A549 (cell line): ENCODE measurements at regions of chr15 and their contacts with region 1.

Region 1: GRCh38 chr15:66851226-66852071 is 149.4 kb downstream of the SMAD6 start:
- DNase-seq: peak; percentile 92 to 97
- ATAC-seq: peak; percentile 87 to 95
- H3K4me3 ChIP-seq: no peak overlapping the region
- H3K27ac ChIP-seq: peak overlapping the region; percentile 64 to 81
- H3K4me1 ChIP-seq: peaks cover 34% of the 10 kb centered on the region
- CTCF ChIP-seq: peak; percentile 93
- EP300 ChIP-seq: no peak
- POLR2A ChIP-seq: no peak
- RAD21 ChIP-seq: peak; percentile 83 to 93

Region 2: DNA sequence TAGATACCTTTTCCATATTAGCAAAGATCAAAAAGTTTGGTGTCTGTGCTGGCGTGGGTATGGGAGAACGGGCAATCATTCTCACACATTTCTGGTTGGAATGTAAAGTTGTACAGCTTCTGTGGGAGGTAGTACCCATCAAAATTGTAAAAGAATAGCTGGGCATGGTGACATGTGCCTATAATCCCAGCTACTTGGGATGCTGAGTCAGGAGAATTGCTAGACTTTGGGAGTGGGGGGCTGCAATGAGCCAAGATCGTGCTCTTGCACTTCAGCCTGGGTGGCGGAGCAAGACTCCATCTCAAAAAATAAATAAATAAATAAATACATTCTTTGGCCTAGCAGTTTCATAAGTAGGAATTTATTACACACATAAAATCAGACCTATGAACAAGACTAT is 308.6 kb before region 1 on chr15:
- CTCF ChIA-PET with region 1: no interaction called
- POLR2A ChIA-PET with region 1: no interaction called
- DNase-seq: no peak
- ATAC-seq: no peak
- H3K4me3 ChIP-seq: no peak overlapping the region
- H3K27ac ChIP-seq: no peak overlapping the region
- H3K4me1 ChIP-seq: no peaks in the 10 kb centered on the region
- CTCF ChIP-seq: no peak
- EP300 ChIP-seq: no peak
- POLR2A ChIP-seq: no peak
- RAD21 ChIP-seq: no peak

Region 3: DNA sequence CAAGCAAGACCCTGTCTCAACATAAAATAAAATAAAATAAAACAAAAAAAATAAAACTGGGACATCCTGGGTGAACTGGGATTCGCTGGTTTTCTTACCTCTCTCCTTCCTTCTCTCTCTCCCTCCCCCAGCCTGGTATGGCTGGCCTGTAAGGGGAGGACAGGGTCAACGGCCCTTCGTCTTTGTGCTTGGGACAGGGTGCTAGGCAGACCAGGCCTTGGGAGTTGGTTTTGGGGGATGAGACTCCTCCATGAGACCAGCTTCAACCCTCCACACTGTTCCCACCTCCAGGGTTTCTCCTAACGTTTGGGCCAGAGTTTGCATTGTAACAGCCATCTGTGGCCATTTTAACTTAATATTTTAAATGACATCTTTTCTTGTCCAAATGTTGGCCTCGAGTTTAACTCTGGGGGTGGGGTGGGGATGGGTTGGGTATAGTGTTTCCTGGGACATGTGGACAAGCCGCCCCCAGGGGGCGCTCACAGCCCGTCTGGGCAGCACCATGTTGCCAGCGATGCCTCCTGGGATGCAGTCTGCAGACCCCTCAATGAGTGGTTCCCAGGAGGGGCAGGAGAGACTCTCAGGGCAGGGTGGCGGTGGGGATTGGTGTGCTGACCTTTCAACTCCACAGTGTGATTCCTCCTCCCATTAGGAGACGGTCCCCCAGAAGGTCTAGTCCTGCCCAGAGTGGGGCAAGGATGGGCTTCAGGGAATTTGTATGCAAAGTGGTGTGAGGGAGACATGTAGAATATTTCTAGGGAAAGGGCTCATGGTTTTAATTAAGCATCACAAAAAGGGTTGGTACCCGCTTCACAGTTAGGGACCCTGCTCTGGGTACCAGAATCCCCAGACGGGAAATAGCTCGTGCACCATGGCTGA is 247.9 kb before region 1 on chr15:
- CTCF ChIA-PET with region 1: interaction called, 148 read pairs
- POLR2A ChIA-PET with region 1: no interaction called
- DNase-seq: peak; percentile 61 to 86
- ATAC-seq: peak; percentile 80 to 97
- H3K4me3 ChIP-seq: no peak overlapping the region
- H3K27ac ChIP-seq: no peak overlapping the region
- H3K4me1 ChIP-seq: no peaks in the 10 kb centered on the region
- CTCF ChIP-seq: peak; percentile 95
- EP300 ChIP-seq: no peak
- POLR2A ChIP-seq: no peak
- RAD21 ChIP-seq: peak; percentile 92

Region 4: DNA sequence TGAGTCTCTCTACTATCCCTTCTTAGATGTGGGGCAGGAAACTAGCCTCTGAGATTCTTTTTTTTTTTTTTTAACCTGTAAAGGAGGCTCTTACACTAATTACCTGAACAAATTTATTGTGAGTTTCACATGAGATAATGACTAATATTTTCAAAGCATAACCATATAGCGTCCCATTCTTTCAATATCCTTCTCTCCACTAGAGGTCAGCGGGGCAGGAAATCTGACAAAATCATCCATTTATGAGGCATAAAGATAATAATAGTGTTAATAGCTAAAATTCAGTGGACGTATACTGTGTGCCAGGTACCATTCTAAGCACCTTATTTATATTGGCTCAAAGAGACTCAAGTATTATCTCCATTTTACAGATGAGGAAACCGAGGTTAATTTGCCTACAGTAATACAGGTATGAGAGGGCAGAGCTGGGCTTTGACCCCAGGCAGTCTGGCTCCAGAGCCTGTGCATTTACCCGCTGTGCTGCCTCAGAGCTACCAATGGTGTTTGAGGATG is 165.8 kb before region 1 on chr15:
- CTCF ChIA-PET with region 1: interaction called, 24 read pairs
- POLR2A ChIA-PET with region 1: no interaction called
- DNase-seq: no peak
- ATAC-seq: peak; percentile 51 to 78; a peak in 4 of 6 replicates
- H3K4me3 ChIP-seq: no peak overlapping the region
- H3K27ac ChIP-seq: no peak overlapping the region
- H3K4me1 ChIP-seq: no peaks in the 10 kb centered on the region
- CTCF ChIP-seq: peak; percentile 58
- EP300 ChIP-seq: no peak
- POLR2A ChIP-seq: no peak
- RAD21 ChIP-seq: peak; percentile 44

Region 5: DNA sequence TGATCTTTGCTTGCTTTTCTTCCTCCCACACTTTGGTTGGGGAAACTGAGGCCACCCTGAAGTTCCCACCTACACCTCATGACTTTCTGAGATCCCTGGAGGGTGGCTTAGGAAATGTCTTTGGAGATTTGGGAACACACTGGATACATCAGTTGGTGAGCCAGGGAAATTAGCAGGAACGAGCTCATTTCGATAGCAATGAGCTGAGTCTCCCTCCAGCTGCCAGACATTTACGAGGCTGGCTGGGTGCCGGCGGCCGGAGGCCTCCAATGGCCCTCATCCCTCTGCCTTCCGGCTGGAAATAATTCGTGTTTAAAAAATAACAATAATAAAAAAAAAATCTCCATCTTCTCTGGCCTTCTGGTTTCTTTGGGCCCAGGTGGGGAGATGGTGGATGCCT is 110.6 kb before region 1 on chr15:
- CTCF ChIA-PET with region 1: interaction called, 26 read pairs
- POLR2A ChIA-PET with region 1: no interaction called
- DNase-seq: no peak
- ATAC-seq: no peak
- H3K4me3 ChIP-seq: no peak overlapping the region
- H3K27ac ChIP-seq: peak overlapping the region in 1 of 2 experiments; percentile 33; a peak in 1 of 6 replicates
- H3K4me1 ChIP-seq: peaks cover 36% of the 10 kb centered on the region
- CTCF ChIP-seq: no peak
- EP300 ChIP-seq: no peak
- POLR2A ChIP-seq: no peak
- RAD21 ChIP-seq: no peak

Region 6: GRCh38 chr15:66789029-66790025 is 62.1 kb before region 1 on chr15:
- CTCF ChIA-PET with region 1: interaction called, 465 read pairs
- POLR2A ChIA-PET with region 1: interaction called, 7 read pairs
- DNase-seq: peak in 1 of 2 experiments; percentile 77
- ATAC-seq: peak; percentile 83
- H3K4me3 ChIP-seq: no peak overlapping the region
- H3K27ac ChIP-seq: 0 out of 6 replicates have a peak overlapping the region, but pooled peaks of 1 of the 2 experiments have one; percentile 6
- H3K4me1 ChIP-seq: peaks cover 19% of the 10 kb centered on the region; the same call in 2 of the 3 replicates
- CTCF ChIP-seq: peak; percentile 66
- EP300 ChIP-seq: no peak
- POLR2A ChIP-seq: no peak
- RAD21 ChIP-seq: peak; percentile 72 to 73

Region 7: DNA sequence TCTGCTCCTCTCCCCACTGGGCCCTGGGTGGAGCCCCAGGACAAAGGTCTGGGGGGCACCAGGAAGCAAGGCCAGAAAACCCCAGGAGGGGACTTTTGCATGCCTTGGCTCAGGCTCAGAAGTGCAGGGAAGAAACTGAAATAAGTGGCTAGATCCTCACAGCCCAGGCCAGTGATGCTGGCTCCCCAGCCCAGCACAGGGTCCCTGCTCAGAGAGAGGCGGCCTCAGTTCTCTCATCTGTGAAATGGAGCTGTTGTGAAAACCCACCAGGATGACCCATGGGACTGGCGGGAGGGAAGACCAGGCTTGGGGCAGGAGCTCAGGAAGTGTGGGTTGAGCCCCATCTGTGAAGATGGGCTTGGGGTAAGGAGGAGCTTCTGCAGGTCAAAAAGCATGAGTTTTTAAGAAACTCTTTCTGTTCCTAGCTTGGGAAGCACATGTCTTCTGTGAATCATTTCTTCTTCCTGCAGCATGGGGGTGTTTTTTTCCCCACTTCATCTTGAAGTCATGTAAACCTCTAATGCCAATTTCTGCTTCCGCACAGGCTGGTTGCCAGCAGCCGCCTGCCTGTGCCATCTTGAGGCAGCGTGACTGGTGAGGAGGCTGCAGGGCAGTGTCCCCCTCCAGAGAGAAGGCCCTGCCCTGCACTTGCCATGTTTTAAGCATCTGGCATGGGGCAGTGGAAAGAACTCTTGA is 30.8 kb before region 1 on chr15:
- CTCF ChIA-PET with region 1: interaction called, 38 read pairs
- POLR2A ChIA-PET with region 1: no interaction called
- DNase-seq: no peak
- ATAC-seq: no peak
- H3K4me3 ChIP-seq: no peak overlapping the region
- H3K27ac ChIP-seq: peak overlapping the region in 1 of 2 experiments; percentile 35; a peak in 1 of 6 replicates
- H3K4me1 ChIP-seq: peaks cover 16% of the 10 kb centered on the region
- CTCF ChIP-seq: no peak
- EP300 ChIP-seq: no peak
- POLR2A ChIP-seq: no peak
- RAD21 ChIP-seq: no peak

Region 8: DNA sequence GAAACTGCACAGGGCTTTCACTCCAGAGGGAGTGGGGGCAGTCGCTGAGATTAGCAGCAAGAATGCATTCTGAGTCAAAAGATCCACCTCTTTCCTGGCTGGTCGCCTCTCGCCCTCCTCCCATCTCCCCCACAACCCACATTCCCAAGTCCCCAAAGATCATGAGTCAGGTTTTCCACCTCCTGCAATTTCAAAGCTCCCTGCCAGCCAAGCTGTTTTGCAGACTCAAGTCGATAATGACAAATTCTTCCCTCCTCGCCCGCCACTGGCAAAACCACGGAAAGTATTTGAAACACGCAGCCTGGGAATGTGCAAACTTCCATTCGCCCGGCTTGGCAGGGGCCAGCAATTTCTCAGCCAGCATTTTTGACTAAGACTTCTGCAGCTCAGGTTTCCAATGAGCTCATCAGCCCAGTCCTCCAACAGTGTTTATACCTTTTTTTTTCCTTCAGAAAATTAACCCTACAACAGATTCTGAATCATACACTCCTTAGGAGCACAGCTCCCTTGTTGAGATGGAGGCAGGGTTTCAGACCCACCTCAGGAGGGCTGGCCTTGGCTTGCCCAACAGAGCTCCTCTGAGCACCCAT is 32.0 kb after region 1 on chr15:
- CTCF ChIA-PET with region 1: interaction called, 17 read pairs
- POLR2A ChIA-PET with region 1: interaction called, 3 read pairs
- DNase-seq: peak; percentile 96 to 99
- ATAC-seq: peak; percentile 87 to 91
- H3K4me3 ChIP-seq: no peak overlapping the region
- H3K27ac ChIP-seq: peak overlapping the region; percentile 75 to 89
- H3K4me1 ChIP-seq: peaks cover 55% of the 10 kb centered on the region
- CTCF ChIP-seq: no peak
- EP300 ChIP-seq: peak; percentile 83 to 95; a peak in 4 of 5 replicates
- POLR2A ChIP-seq: no peak
- RAD21 ChIP-seq: peak; percentile 34 to 61